Prostate gland (tissue), 2 donors: ENCODE measurements at regions of chr9 and their contacts with region 1.

Region 1: DNA sequence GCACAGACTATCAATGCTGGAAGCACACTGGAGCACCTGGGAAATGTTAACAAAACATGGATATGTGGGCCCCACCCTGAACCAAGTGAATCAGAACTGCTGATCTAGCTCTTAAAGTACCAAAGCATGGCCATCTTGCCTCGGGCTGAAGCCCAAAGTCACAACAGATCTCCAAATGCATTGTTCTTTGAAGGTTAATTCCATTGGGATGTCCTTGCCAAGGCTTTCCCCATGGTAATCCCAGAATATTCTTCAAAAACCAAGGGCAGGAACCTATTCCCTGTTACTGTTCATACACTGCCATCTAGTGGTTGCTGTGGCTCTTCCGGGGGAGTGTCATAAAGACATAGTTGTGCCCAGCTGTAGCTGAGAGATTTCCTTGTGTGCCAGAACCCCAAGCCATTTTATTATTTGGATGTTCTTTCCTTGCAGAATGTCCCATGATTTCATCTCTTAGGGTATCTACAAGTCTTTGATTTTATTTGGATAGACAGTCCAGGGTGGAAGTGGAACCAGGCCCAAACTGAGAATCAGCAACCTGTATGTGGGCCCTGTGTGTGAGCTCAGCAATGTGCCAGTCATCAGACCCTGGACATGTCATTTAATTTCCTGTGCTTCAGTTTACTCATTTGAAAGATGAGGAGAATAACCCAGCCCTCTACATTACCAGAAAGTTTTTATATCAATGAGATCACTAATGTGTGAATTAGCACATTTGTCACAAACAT is 290.0 kb downstream of the ACTL7B start:
- DNase-seq: peak; percentile 72
- H3K4me3 ChIP-seq: no peak overlapping the region
- H3K27ac ChIP-seq: no peak overlapping the region
- H3K4me1 ChIP-seq: no peaks in the 10 kb centered on the region
- H3K27me3 ChIP-seq: no peaks in the 10 kb centered on the region
- CTCF ChIP-seq: peak; percentile 65 to 90 (median 82)
- POLR2A ChIP-seq: no peak

Region 2: GRCh38 chr9:107465467-107466451 is 1100.1 kb before region 1 on chr9:
- intact Hi-C with region 1: loop called (anchors 5 kb)
- DNase-seq: peak; percentile 57
- H3K4me3 ChIP-seq: peak overlapping the region; percentile 35 to 61
- H3K27ac ChIP-seq: peak overlapping the region; percentile 52 to 58
- H3K4me1 ChIP-seq: no peaks in the 10 kb centered on the region
- H3K27me3 ChIP-seq: no peaks in the 10 kb centered on the region
- CTCF ChIP-seq: peak; percentile 76 to 92 (median 84)
- POLR2A ChIP-seq: no peak

Region 3: DNA sequence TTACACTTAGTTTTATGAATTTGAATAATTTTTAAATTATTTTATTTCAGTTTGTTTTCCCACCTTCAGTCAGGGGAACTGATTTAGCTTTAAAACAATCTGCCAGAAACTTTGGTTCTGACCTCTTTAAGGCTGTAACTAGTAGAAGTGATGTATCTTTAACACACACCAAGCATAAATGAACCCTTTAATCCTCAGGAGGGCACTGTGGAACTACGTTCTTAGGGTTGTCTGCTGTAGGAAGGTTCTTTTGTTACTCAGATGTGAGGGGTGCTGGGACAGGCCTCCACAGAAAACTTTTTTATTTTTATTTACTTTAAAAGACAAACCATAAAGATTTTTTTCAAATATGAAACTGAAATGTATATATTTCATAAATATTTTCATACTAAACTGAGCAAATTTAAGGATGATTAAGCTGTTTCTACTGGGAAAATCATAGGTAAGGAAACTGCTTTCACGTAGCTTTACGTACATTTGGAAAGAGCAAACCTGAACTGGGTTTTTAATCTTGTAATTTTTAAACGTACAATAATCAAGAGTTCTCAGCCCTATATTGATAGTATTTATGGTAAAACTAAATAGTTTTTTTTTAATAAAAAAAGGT is 1081.6 kb before region 1 on chr9:
- intact Hi-C with region 1: loop called (anchors 2 kb)
- DNase-seq: peak; percentile 62
- H3K4me3 ChIP-seq: peak overlapping the region in 1 of 2 donors; percentile 12
- H3K27ac ChIP-seq: no peak overlapping the region
- H3K4me1 ChIP-seq: peaks cover 4% of the 10 kb centered on the region
- H3K27me3 ChIP-seq: no peaks in the 10 kb centered on the region
- CTCF ChIP-seq: peak in 3 of 4 experiments; percentile 50 to 74 (median 64)
- POLR2A ChIP-seq: no peak

Region 4: DNA sequence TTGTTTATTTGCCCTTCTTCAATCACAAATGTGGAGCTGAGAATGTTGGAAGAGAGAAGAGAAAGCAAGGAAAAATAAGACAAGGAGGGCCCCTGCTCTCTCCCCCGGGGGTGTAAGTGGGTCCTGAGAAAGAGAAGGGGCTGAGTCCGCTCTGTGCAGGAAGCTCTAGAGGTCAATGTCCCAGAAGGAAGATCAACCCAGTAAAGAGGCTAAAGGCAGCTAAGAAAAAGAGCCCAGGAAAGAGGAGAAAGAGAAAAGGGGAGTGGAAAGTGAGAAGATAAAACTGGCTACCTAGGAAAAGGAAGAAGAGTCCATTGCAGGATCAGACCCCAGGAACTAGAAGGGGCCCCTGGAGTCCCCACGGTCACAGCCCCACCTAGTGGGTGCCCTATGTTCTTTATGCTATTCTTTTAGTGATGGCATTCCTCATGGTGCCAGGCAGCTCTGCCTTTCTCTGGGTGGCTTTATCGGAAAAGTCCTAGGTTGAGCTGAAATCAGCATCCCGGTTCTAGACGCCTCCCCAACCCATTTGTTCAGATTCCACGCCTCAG is 293.4 kb before region 1 on chr9:
- intact Hi-C with region 1: loop called (anchors 10 kb)
- DNase-seq: peak; percentile 49
- H3K4me3 ChIP-seq: peak overlapping the region; percentile 4 to 20
- H3K27ac ChIP-seq: peak overlapping the region; percentile 82 to 85
- H3K4me1 ChIP-seq: no peaks in the 10 kb centered on the region
- H3K27me3 ChIP-seq: no peaks in the 10 kb centered on the region
- CTCF ChIP-seq: peak; percentile 63 to 72 (median 65)
- POLR2A ChIP-seq: no peak